Endothelial cell of umbilical vein (primary cell): ENCODE measurements at regions of chr7 and their contacts with region 1.

Region 1: DNA sequence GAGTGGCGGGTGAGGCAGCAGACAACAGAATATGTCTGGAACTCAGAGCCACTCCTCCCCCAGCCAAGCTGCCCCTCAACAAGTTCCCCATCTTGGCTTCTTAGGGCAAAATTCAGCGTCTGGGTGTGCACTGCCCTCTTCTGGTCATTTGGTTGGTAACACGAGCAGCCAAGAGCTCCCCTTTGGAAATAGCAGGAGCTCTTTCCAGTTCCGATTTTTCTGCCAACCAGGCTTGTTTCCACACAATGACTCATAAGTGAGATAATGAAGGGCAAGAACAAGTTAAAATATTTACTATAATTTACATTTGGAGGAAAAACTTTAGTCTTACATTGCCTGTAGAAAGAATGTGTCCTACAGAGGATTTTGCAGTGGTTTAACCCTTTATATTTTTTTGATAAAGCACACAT is 70.5 kb downstream of the ADCYAP1R1 start:
- DNase-seq: peak; percentile 88
- H3K4me3 ChIP-seq: no peak overlapping the region
- H3K27ac ChIP-seq: no peak overlapping the region
- H3K4me1 ChIP-seq: no peaks in the 10 kb centered on the region
- H3K27me3 ChIP-seq: peaks cover 0 to 14% of the 10 kb centered on the region in 2 experiments
- CTCF ChIP-seq: peak; percentile 81 to 85
- POLR2A ChIP-seq: no peak

Region 2: DNA sequence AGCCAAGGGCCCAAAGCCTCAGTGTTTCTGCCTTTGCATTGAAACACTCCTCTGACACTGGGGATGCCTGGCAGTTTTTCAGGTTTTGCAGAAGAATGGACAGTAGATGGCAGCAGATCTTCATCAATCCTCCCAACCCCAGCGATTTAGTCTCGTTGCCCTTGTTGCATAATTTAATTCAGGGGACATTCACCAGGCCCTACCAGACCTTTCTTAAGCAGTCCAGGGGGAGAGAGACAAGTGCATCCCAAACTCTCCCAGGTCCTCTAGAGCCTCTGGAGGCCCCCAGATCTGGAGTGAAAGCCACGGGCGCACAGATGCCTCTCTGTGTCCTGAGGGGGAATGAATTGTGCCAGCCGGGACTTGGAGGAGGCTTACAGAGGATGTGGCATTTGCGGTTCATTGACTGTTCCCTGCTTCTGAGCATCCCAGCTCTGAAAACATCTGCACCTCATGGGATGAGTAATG is 321.8 kb before region 1 on chr7:
- CTCF ChIA-PET with region 1: interaction called, 75 read pairs
- POLR2A ChIA-PET with region 1: no interaction called
- dilution Hi-C with region 1: no loop called
- intact Hi-C with region 1: loop called (anchors 1 kb)
- DNase-seq: peak; percentile 80
- H3K4me3 ChIP-seq: no peak overlapping the region
- H3K27ac ChIP-seq: no peak overlapping the region
- H3K4me1 ChIP-seq: peaks cover 58% of the 10 kb centered on the region
- H3K27me3 ChIP-seq: no peaks in the 10 kb centered on the region
- CTCF ChIP-seq: peak; percentile 62 to 70
- POLR2A ChIP-seq: no peak

Region 3: DNA sequence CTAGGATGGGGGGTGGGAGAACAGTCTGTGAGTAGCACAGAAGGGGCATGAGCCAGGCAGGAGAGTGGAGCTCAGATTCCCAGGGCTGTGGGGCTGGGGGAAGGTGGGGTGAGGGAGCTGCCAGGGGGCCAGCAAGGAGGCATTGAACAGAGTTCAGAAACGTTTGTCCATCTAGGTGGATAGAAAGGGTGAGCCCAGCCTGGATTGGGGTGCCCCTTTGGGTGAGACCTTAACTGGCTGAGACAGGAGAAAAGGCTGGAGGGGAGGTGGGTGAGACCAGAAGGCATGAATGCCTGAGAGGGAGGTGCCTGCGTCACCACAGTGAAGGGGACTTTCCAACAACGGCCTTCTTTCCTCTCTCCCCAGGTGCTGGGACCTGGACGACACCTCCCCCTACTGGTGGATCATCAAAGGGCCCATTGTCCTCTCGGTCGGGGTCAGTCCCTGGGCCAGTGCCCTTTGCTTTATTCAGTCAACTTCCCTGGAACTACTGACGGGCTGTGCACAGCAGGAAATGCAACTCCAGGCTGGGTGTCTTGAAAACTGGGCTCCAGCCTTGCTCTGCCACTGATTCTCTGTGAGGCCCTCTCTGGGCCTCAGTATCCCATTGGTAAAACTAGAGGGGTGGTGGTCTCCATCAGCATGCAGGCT is 147.9 kb before region 1 on chr7:
- CTCF ChIA-PET with region 1: interaction called, 1,079 read pairs
- POLR2A ChIA-PET with region 1: no interaction called
- dilution Hi-C with region 1: no loop called
- intact Hi-C with region 1: no loop called
- DNase-seq: peak; percentile 62
- H3K4me3 ChIP-seq: no peak overlapping the region
- H3K27ac ChIP-seq: no peak overlapping the region
- H3K4me1 ChIP-seq: no peaks in the 10 kb centered on the region
- H3K27me3 ChIP-seq: peaks cover 22 to 29% of the 10 kb centered on the region in 2 experiments
- CTCF ChIP-seq: peak; percentile 61 to 81
- POLR2A ChIP-seq: no peak

Region 4: DNA sequence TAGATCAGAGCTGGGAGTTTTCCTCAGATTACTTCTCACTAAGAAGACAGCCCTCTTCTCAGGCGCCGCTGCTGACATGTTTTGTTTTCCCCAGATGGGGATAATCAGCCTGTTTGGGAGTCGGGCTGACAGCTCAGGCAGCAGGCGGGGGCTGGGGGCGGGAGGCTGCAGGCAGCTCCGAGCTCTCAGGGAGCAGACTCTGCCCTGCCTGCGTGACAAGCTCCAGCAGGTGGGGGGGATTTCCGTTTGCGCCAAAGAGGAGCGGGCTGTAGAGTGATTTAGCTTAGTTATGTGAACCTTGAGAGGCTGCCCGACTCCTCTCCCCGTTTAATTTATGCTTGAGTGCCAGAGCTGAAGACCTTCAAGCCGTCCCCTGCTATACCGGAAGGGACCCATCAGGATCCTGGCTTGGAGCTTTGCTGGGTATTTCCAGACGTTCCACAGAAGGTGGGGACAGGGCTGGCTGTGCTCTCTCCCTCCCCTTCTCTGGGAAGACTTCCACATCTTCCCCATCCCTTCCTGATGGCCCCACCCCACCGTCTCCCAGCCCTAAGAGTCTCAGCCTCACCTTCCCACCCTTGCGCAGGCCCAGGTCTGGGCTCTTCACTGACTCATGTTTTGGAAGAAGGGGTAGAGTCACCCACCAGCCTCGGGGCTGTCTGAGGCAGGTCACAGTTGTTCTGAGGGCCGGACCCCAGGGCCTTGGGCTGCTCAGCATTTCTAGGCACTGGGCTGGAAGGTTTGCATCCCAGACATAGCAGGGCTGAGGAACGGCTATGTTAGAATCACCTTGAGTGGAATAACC is 95.3 kb before region 1 on chr7:
- CTCF ChIA-PET with region 1: interaction called, 15 read pairs
- POLR2A ChIA-PET with region 1: no interaction called
- dilution Hi-C with region 1: no loop called
- intact Hi-C with region 1: no loop called
- DNase-seq: no peak
- H3K4me3 ChIP-seq: no peak overlapping the region
- H3K27ac ChIP-seq: no peak overlapping the region
- H3K4me1 ChIP-seq: no peaks in the 10 kb centered on the region
- H3K27me3 ChIP-seq: peaks cover 0 to 5% of the 10 kb centered on the region in 2 experiments
- CTCF ChIP-seq: no peak
- POLR2A ChIP-seq: no peak

Region 5: GRCh38 chr7:31065021-31065593 is 57.5 kb before region 1 on chr7:
- CTCF ChIA-PET with region 1: interaction called, 73 read pairs
- POLR2A ChIA-PET with region 1: no interaction called
- dilution Hi-C with region 1: no loop called
- intact Hi-C with region 1: no loop called
- DNase-seq: no peak
- H3K4me3 ChIP-seq: no peak overlapping the region
- H3K27ac ChIP-seq: no peak overlapping the region
- H3K4me1 ChIP-seq: no peaks in the 10 kb centered on the region
- H3K27me3 ChIP-seq: no peaks in the 10 kb centered on the region
- CTCF ChIP-seq: no peak
- POLR2A ChIP-seq: no peak

Region 6: GRCh38 chr7:31096877-31097258 is 25.8 kb before region 1 on chr7:
- CTCF ChIA-PET with region 1: interaction called, 24 read pairs
- POLR2A ChIA-PET with region 1: no interaction called
- dilution Hi-C with region 1: no loop called
- intact Hi-C with region 1: no loop called
- DNase-seq: no peak
- H3K4me3 ChIP-seq: no peak overlapping the region
- H3K27ac ChIP-seq: no peak overlapping the region
- H3K4me1 ChIP-seq: no peaks in the 10 kb centered on the region
- H3K27me3 ChIP-seq: peaks cover 0 to 2% of the 10 kb centered on the region in 2 experiments
- CTCF ChIP-seq: no peak
- POLR2A ChIP-seq: no peak

Region 7: GRCh38 chr7:31211281-31211680 is 88.6 kb after region 1 on chr7:
- CTCF ChIA-PET with region 1: no interaction called
- POLR2A ChIA-PET with region 1: no interaction called
- dilution Hi-C with region 1: no loop called
- intact Hi-C with region 1: no loop called
- DNase-seq: no peak
- H3K4me3 ChIP-seq: no peak overlapping the region
- H3K27ac ChIP-seq: no peak overlapping the region
- H3K4me1 ChIP-seq: no peaks in the 10 kb centered on the region
- H3K27me3 ChIP-seq: no peaks in the 10 kb centered on the region
- CTCF ChIP-seq: no peak
- POLR2A ChIP-seq: no peak